ENCODE measurements at regions of chr1 and their contacts with region 1.

Region 1: GRCh38 chr1:6554031-6554906 is at the start of gene NOL9:
- DNase-seq: peak; percentile 98
- ATAC-seq: peak; percentile 98
- H3K4me3 Mint-ChIP-seq: peak within 1 kb of the TSS; percentile 85
- H3K27ac Mint-ChIP-seq: peak within 1 kb of the TSS; percentile 84
- H3K4me1 Mint-ChIP-seq: peaks cover 21% of the 10 kb centered on the region
- H3K27me3 Mint-ChIP-seq: no peaks in the 10 kb centered on the region
- CTCF ChIP-seq: peak; percentile 62
- total RNA-seq, gene NOL9: 43.6 and 58.6 TPM in 2 replicates

Region 2: GRCh38 chr1:4944911-4945310 is 1609.4 kb before region 1 on chr1:
- CTCF ChIA-PET with region 1: no interaction called
- POLR2A ChIA-PET with region 1: no interaction called
- intact Hi-C with region 1: no loop called
- DNase-seq: no peak
- ATAC-seq: no peak
- H3K4me3 Mint-ChIP-seq: no peak overlapping the region
- H3K27ac Mint-ChIP-seq: no peak overlapping the region
- H3K4me1 Mint-ChIP-seq: no peaks in the 10 kb centered on the region
- H3K27me3 Mint-ChIP-seq: no peaks in the 10 kb centered on the region
- CTCF ChIP-seq: no peak

Region 3: GRCh38 chr1:6199298-6200187 is 354.7 kb before region 1 on chr1 and contains the start of gene RPL22:
- CTCF ChIA-PET with region 1: no interaction called
- POLR2A ChIA-PET with region 1: no interaction called
- intact Hi-C with region 1: loop called (anchors 1 kb)
- DNase-seq: peak; percentile 89
- ATAC-seq: peak; percentile 97
- H3K4me3 Mint-ChIP-seq: peak within 1 kb of the TSS; percentile 88
- H3K27ac Mint-ChIP-seq: peak within 1 kb of the TSS; percentile 94
- H3K4me1 Mint-ChIP-seq: peaks cover 44% of the 10 kb centered on the region
- H3K27me3 Mint-ChIP-seq: peaks cover 3% of the 10 kb centered on the region
- CTCF ChIP-seq: no peak
- total RNA-seq, gene RPL22: 614 and 621 TPM in 2 replicates

Region 4: GRCh38 chr1:6579374-6580118 is 25.3 kb after region 1 on chr1 and contains the start of gene ZBTB48:
- CTCF ChIA-PET with region 1: interaction called, 15 read pairs
- POLR2A ChIA-PET with region 1: interaction called, 21 read pairs
- intact Hi-C with region 1: loop called (anchors 1 kb)
- DNase-seq: peak; percentile 95
- ATAC-seq: peak; percentile 97
- H3K4me3 Mint-ChIP-seq: peak within 1 kb of the TSS; percentile 95
- H3K27ac Mint-ChIP-seq: peak within 1 kb of the TSS; percentile 94
- H3K4me1 Mint-ChIP-seq: peaks cover 37% of the 10 kb centered on the region
- H3K27me3 Mint-ChIP-seq: no peaks in the 10 kb centered on the region
- CTCF ChIP-seq: no peak
- total RNA-seq, gene ZBTB48: 53.2 and 53.8 TPM in 2 replicates

Region 5: DNA sequence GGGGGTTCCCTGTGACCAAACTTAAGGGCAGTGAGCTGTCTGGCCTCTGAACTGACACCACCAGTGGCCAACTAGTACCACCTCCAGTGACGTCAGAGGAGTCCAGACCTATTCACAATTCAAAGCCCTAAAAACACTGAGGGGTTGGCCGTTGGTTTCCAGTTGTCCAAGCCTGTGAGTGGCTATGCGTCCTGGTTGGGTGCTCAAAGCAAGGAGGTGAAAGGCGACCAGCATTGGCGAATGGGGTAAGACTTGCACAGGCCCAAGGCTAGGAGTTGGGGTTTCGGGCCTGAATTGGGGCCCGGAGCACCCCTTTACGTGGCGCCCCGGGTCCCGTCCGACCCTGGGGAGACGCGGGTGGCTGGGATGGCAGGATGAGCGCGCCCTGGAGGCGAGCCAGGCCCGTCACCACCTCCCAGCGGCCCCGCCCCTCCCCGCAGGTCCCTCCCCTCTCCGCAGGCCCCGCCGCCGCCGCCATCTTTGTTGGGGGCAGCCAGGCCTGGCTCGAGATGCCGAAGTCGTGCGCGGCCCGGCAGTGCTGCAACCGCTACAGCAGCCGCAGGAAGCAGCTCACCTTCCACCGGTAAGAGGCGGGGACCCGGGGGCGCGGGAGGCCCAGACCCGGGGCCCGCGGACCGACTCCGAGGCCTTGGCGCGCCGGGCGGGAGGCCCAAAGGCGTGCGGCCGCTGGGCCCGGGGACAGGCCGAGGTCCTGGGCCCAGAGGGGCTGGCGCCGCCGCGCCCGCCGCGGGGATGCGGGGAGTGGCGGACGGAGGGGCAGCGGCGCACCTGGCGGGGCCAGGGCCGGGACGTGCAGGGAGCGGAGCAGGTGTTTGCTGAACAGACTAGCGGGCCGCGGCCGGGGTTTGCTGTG is 70.7 kb after region 1 on chr1 and contains the start of gene THAP3:
- CTCF ChIA-PET with region 1: interaction called, 4 read pairs
- POLR2A ChIA-PET with region 1: interaction called, 4 read pairs
- intact Hi-C with region 1: loop called (anchors 1 kb)
- DNase-seq: peak; percentile 83
- ATAC-seq: peak; percentile 97
- H3K4me3 Mint-ChIP-seq: peak within 1 kb of the TSS; percentile 86
- H3K27ac Mint-ChIP-seq: peak within 1 kb of the TSS; percentile 71
- H3K4me1 Mint-ChIP-seq: peaks cover 32% of the 10 kb centered on the region
- H3K27me3 Mint-ChIP-seq: no peaks in the 10 kb centered on the region
- CTCF ChIP-seq: no peak
- total RNA-seq, gene THAP3: 16.2 and 21.3 TPM in 2 replicates

Region 6: GRCh38 chr1:6638226-6638625 is 84.0 kb after region 1 on chr1:
- CTCF ChIA-PET with region 1: no interaction called
- POLR2A ChIA-PET with region 1: no interaction called
- intact Hi-C with region 1: no loop called
- DNase-seq: no peak
- ATAC-seq: no peak
- H3K4me3 Mint-ChIP-seq: no peak overlapping the region
- H3K27ac Mint-ChIP-seq: no peak overlapping the region
- H3K4me1 Mint-ChIP-seq: no peaks in the 10 kb centered on the region
- H3K27me3 Mint-ChIP-seq: no peaks in the 10 kb centered on the region
- CTCF ChIP-seq: no peak

Region 7: GRCh38 chr1:6701437-6702153 is 147.3 kb after region 1 on chr1 and contains the start of gene DNAJC11:
- CTCF ChIA-PET with region 1: no interaction called
- POLR2A ChIA-PET with region 1: interaction called, 4 read pairs
- intact Hi-C with region 1: loop called (anchors 1 kb)
- DNase-seq: peak; percentile 99
- ATAC-seq: peak; percentile 95
- H3K4me3 Mint-ChIP-seq: peak within 1 kb of the TSS; percentile 92
- H3K27ac Mint-ChIP-seq: peak within 1 kb of the TSS; percentile 88
- H3K4me1 Mint-ChIP-seq: peaks cover 21% of the 10 kb centered on the region
- H3K27me3 Mint-ChIP-seq: no peaks in the 10 kb centered on the region
- CTCF ChIP-seq: peak; percentile 28
- total RNA-seq, gene DNAJC11: 57.0 and 65.6 TPM in 2 replicates

Region 8: GRCh38 chr1:6962478-6962995 is 408.3 kb after region 1 on chr1:
- CTCF ChIA-PET with region 1: no interaction called
- POLR2A ChIA-PET with region 1: no interaction called
- intact Hi-C with region 1: no loop called
- DNase-seq: no peak
- ATAC-seq: peak; percentile 49
- H3K4me3 Mint-ChIP-seq: no peak overlapping the region
- H3K27ac Mint-ChIP-seq: no peak overlapping the region
- H3K4me1 Mint-ChIP-seq: peaks cover 23% of the 10 kb centered on the region
- H3K27me3 Mint-ChIP-seq: peaks cover 53% of the 10 kb centered on the region
- CTCF ChIP-seq: no peak

Measured in activated B cell treated with CpG ODN at 0.5 μM for 24 hours (primary cell).